ENCODE measurements at regions of chr6 and their contacts with region 1.

Region 1: DNA sequence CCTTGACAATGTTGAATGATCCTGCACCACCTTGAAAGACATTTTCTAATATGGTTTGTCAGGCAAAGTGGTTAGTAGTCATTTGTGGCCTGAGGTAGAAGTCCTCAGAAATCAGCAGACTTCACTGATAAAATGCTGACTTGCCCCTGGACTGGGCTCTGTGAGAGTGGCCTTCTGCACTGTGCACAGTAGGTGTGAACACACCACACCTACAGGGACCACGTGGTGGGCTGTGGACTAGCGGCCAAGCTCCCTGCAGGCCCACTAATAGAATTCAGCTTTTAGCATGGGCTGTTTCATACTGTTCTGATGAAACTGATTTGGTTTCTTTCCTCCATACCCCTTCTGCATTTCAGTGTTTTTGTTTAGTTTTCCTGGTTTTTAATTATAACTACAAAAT is 7.3 kb downstream of the BPHL start:
- DNase-seq: no peak
- ATAC-seq: no peak
- H3K4me3 ChIP-seq: no peak overlapping the region
- H3K27ac ChIP-seq: no peak overlapping the region
- H3K4me1 ChIP-seq: peaks cover 0 to 3% of the 10 kb centered on the region in 2 experiments; a peak in 2 of 4 replicates
- H3K27me3 ChIP-seq: no peaks in the 10 kb centered on the region
- CTCF ChIP-seq: no peak
- POLR2A ChIP-seq: no peak
- RAD21 ChIP-seq: no peak

Region 2: GRCh38 chr6:3108746-3109414 is 16.9 kb before region 1 on chr6:
- CTCF ChIA-PET with region 1: no interaction called
- POLR2A ChIA-PET with region 1: no interaction called
- RAD21 ChIA-PET with region 1: no interaction called
- intact Hi-C with region 1: no loop called
- DNase-seq: no peak
- ATAC-seq: no peak
- H3K4me3 ChIP-seq: no peak overlapping the region
- H3K27ac ChIP-seq: no peak overlapping the region
- H3K4me1 ChIP-seq: no peaks in the 10 kb centered on the region
- H3K27me3 ChIP-seq: no peaks in the 10 kb centered on the region
- CTCF ChIP-seq: no peak
- POLR2A ChIP-seq: no peak
- RAD21 ChIP-seq: no peak

Region 3: DNA sequence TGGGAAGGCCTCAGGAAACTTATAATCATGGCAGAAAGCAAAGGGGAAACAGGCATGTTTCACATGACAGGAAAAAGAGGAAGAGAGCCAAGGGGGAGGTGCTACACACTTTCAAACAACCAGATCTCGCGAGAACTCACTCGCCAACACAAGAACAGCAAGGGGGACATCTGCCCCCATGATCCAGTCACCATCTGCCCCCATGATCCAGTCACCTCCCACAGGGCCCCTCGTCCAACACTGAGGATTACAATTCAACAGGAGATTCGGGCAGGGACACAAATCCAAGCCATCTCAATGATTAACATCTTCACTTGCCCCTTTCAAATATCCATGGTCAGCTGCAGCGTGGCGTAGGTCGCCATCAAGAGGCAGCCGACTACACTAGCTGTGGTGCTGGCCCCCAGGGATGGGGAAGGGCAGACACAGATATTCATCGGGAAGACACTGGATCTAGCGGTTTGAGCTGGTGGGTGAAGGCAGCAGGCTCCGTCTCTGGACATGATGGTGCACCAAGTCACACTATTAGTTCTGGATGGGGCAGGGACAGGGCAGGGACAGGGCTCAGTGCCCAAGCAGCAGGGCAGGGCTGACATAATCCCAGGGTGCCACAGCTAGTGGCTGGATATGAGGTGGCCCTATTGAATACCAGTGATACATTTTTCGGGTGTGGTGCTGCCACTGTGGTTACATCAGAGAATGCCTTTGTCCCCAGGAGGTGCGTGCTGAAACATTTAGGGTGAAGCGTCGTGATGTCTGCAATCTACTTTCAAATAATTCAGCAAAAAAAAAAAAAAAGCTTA is 70.1 kb after region 1 on chr6:
- CTCF ChIA-PET with region 1: interaction called, 6 read pairs
- POLR2A ChIA-PET with region 1: no interaction called
- RAD21 ChIA-PET with region 1: no interaction called
- intact Hi-C with region 1: loop called (anchors 1 kb)
- DNase-seq: peak; percentile 19
- ATAC-seq: peak; percentile 80
- H3K4me3 ChIP-seq: peak overlapping the region in 1 of 2 experiments; percentile 23; a peak in 1 of 4 replicates
- H3K27ac ChIP-seq: no peak overlapping the region
- H3K4me1 ChIP-seq: peaks cover 8 to 20% of the 10 kb centered on the region in 2 experiments; a peak in 3 of 4 replicates
- H3K27me3 ChIP-seq: no peaks in the 10 kb centered on the region
- CTCF ChIP-seq: peak; percentile 14 to 55 (median 45); a peak in 4 of 6 replicates
- POLR2A ChIP-seq: no peak
- RAD21 ChIP-seq: peak; percentile 76

Region 4: GRCh38 chr6:3239110-3239830 is 113.5 kb after region 1 on chr6:
- CTCF ChIA-PET with region 1: no interaction called
- POLR2A ChIA-PET with region 1: no interaction called
- RAD21 ChIA-PET with region 1: no interaction called
- intact Hi-C with region 1: loop called (anchors 1 kb)
- DNase-seq: peak; percentile 49
- ATAC-seq: peak; percentile 99
- H3K4me3 ChIP-seq: no peak overlapping the region
- H3K27ac ChIP-seq: no peak overlapping the region
- H3K4me1 ChIP-seq: peaks cover 0 to 5% of the 10 kb centered on the region in 2 experiments; a peak in 1 of 4 replicates
- H3K27me3 ChIP-seq: no peaks in the 10 kb centered on the region
- CTCF ChIP-seq: peak in 2 of 3 experiments; percentile 56 to 73; a peak in 4 of 6 replicates
- POLR2A ChIP-seq: no peak
- RAD21 ChIP-seq: peak; percentile 49; the same call in 1 of the 2 replicates

Region 5: GRCh38 chr6:3258720-3259490 is 133.1 kb after region 1 on chr6 and contains the start of gene PSMG4:
- CTCF ChIA-PET with region 1: no interaction called
- POLR2A ChIA-PET with region 1: no interaction called
- RAD21 ChIA-PET with region 1: no interaction called
- intact Hi-C with region 1: loop called (anchors 2 kb)
- DNase-seq: peak; percentile 75
- ATAC-seq: peak; percentile 88
- H3K4me3 ChIP-seq: peak within 1 kb of the TSS; percentile 74
- H3K27ac ChIP-seq: peak within 1 kb of the TSS; percentile 76
- H3K4me1 ChIP-seq: peaks cover 9 to 18% of the 10 kb centered on the region in 2 experiments; a peak in 3 of 4 replicates
- H3K27me3 ChIP-seq: no peaks in the 10 kb centered on the region
- CTCF ChIP-seq: no peak
- POLR2A ChIP-seq: peak; percentile 41
- RAD21 ChIP-seq: no peak
- total RNA-seq, gene PSMG4: 35.0 TPM

Region 6: GRCh38 chr6:3732345-3733141 is 606.7 kb after region 1 on chr6:
- CTCF ChIA-PET with region 1: no interaction called
- POLR2A ChIA-PET with region 1: no interaction called
- RAD21 ChIA-PET with region 1: no interaction called
- intact Hi-C with region 1: loop called (anchors 10 kb)
- DNase-seq: no peak
- ATAC-seq: peak; percentile 98
- H3K4me3 ChIP-seq: no peak overlapping the region
- H3K27ac ChIP-seq: no peak overlapping the region
- H3K4me1 ChIP-seq: no peaks in the 10 kb centered on the region
- H3K27me3 ChIP-seq: no peaks in the 10 kb centered on the region
- CTCF ChIP-seq: peak; percentile 82 to 86 (median 86)
- POLR2A ChIP-seq: no peak
- RAD21 ChIP-seq: peak; percentile 98

Measured in HCT116 (cell line).